ENCODE measurements at regions of chr1 and their contacts with region 1.

Region 1: GRCh38 chr1:150629115-150629928 is at the start of gene ENSA:
- DNase-seq: peak; percentile 99
- ATAC-seq: peak; percentile 97
- total RNA-seq, gene ENSA: 131 TPM

Region 2: DNA sequence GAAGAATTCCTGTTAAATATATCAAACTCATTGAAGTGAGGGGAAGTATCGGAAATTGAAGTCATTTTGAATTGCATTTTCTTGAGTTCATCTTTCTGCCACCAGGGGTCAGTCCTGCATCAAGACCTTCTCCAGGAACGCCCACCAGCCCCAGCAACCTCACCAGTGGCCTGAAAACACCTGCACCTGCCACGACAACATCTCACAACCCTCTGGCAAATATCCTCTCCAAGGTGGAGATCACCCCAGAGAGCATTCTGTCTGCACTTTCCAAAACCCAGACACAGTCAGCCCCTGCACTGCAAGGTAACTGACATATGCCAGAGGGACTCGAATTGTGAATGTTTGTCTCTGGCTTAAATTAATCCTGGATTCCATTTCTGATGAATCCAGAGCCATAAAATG is 164.9 kb before region 1 on chr1:
- intact Hi-C with region 1: loop called (anchors 10 kb)
- DNase-seq: peak; percentile 72
- ATAC-seq: peak; percentile 67

Region 3: GRCh38 chr1:150552692-150553278 is 76.5 kb before region 1 on chr1:
- intact Hi-C with region 1: no loop called
- DNase-seq: no peak
- ATAC-seq: no peak

Region 4: GRCh38 chr1:150578965-150579798 is 50.1 kb before region 1 on chr1 and contains the start of gene MCL1:
- intact Hi-C with region 1: loop called (anchors 2 kb)
- DNase-seq: peak; percentile 97
- ATAC-seq: peak; percentile 95
- total RNA-seq, gene MCL1: 99.7 TPM

Measured in Right ventricle myocardium inferior (tissue), 1 donor.